ENCODE measurements at regions of chr2 and their contacts with region 1.

Region 1: GRCh38 chr2:174603280-174603679 is 5.7 kb upstream of the WIPF1 start:
- DNase-seq: peak; percentile 55
- H3K4me3 ChIP-seq: no peak overlapping the region
- H3K27ac ChIP-seq: no peak overlapping the region
- H3K4me1 ChIP-seq: peaks cover 8% of the 10 kb centered on the region
- H3K27me3 ChIP-seq: no peaks in the 10 kb centered on the region
- CTCF ChIP-seq: peak in 2 of 4 experiments; percentile 39 to 58
- POLR2A ChIP-seq: no peak

Region 2: GRCh38 chr2:174487108-174487819 is 116.0 kb before region 1 on chr2:
- intact Hi-C with region 1: loop called (anchors 10 kb)
- DNase-seq: peak; percentile 99
- H3K4me3 ChIP-seq: peak overlapping the region; percentile 76 to 80
- H3K27ac ChIP-seq: peak overlapping the region; percentile 67 to 77
- H3K4me1 ChIP-seq: no peaks in the 10 kb centered on the region
- H3K27me3 ChIP-seq: no peaks in the 10 kb centered on the region
- CTCF ChIP-seq: no peak
- POLR2A ChIP-seq: no peak